IMR-90 (cell line): ENCODE measurements at regions of chr5 and their contacts with region 1.

Region 1: DNA sequence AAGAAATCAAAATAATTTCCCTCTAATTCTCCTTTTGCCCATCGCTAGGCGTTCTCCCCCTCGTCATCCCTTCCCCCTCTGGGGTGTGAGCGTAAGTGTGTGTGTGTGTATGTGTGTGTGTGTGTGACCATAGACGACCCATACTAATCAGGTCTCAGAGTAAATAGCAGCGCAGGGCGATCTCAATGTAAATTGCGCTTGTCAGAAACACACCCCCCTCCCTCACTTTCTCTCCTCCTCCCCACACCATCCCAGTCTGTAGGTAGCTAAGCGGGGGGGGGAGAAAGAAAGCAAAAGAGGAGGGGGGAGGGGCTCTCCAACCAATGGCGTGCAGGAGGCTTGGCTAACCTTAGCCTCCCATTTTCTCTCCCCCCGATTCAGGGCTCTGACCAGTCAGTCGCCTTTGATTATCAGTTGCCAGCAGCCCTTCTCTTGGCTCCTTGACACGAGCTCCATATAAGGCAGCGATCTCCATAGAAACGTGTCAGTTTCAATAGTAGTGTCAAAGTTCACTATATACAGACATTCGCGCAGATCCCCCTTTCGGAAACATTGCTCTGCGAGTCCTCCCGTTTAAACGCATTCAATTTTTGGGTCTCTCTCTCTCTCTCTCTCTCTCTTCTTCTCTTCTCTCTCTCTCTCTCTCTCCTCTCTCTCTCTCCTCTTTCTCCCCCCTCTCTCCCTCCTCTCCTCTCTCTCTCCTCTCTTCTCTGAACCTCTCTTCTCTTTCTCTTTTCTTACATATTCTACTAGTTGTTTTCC is at the start of gene NR2F1:
- DNase-seq: peak; percentile 99
- ATAC-seq: peak; percentile 45
- H3K4me3 ChIP-seq: peak within 1 kb of the TSS; percentile 99
- H3K27ac ChIP-seq: peak within 1 kb of the TSS; percentile 97
- H3K4me1 ChIP-seq: no peaks in the 10 kb centered on the region
- H3K27me3 ChIP-seq: no peaks in the 10 kb centered on the region
- CTCF ChIP-seq: 0 out of 2 replicates have a peak, but pooled peaks have one; percentile 23
- POLR2A ChIP-seq: peak; percentile 69
- RAD21 ChIP-seq: no peak
- total RNA-seq, gene NR2F1: 18.1 and 19.0 TPM in 2 replicates

Region 2: DNA sequence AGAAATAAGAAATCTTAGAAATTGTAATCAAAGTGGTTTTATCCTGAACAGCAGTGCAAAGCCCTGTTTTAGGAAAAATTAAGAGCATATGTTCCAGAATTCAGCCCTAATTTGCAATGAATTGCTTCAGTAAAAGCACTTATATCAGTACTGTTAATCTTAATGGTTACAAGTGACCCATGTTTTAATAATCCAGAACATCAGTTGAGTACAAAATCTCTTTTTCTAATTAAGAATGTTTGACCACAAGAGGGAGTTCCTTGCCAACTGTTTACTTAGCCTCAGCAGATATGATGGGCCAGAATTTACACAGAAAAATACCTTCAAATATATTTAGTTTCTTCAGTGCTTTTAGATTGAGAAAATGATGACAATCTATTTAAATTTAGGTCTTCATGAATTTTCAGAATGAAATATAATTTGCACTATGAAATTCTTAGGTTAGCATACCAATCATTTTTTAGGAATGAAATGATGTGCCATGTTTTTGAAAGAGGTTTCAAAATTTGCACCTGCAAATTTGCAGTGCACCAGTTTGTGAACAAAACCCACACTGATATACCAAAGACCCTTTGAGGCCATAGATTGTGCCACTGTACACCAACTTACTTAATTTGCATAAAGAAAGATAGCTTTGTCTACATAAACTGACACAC is 1273.4 kb before region 1 on chr5:
- CTCF ChIA-PET with region 1: no interaction called
- POLR2A ChIA-PET with region 1: no interaction called
- dilution Hi-C with region 1: no loop called
- in situ Hi-C with region 1: loop called (anchors 25 kb)
- intact Hi-C with region 1: loop called (anchors 2 kb)
- DNase-seq: peak; percentile 59
- ATAC-seq: peak; percentile 74
- H3K4me3 ChIP-seq: no peak overlapping the region
- H3K27ac ChIP-seq: no peak overlapping the region
- H3K4me1 ChIP-seq: no peaks in the 10 kb centered on the region
- H3K27me3 ChIP-seq: no peaks in the 10 kb centered on the region
- CTCF ChIP-seq: peak; percentile 66
- POLR2A ChIP-seq: no peak
- RAD21 ChIP-seq: peak; percentile 77

Region 3: DNA sequence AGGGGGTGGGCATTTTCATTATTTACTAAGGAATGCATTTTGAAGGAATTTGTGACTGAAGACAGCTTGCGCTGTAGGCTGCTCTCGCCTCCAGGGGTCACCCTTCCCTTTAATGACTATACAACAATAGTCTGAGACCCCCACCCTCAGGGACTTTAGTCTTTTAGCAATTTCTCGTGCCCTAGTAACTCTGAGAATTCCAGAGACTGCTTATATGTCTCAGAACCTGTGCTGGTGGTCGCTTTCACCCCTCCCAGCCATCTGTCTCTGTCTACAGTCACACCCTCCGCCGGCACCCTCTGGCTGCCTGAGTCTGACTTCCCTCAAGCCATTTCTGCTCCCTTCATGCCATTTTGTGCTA is 673.3 kb before region 1 on chr5:
- CTCF ChIA-PET with region 1: no interaction called
- POLR2A ChIA-PET with region 1: no interaction called
- dilution Hi-C with region 1: no loop called
- in situ Hi-C with region 1: loop called (anchors 25 kb)
- intact Hi-C with region 1: loop called (anchors 2 kb)
- DNase-seq: peak; percentile 11
- ATAC-seq: no peak
- H3K4me3 ChIP-seq: no peak overlapping the region
- H3K27ac ChIP-seq: no peak overlapping the region
- H3K4me1 ChIP-seq: peaks cover 3% of the 10 kb centered on the region
- H3K27me3 ChIP-seq: no peaks in the 10 kb centered on the region
- CTCF ChIP-seq: peak; percentile 43
- POLR2A ChIP-seq: no peak
- RAD21 ChIP-seq: peak; percentile 49

Region 4: GRCh38 chr5:93100976-93101375 is 481.9 kb before region 1 on chr5:
- CTCF ChIA-PET with region 1: no interaction called
- POLR2A ChIA-PET with region 1: interaction called, 10 read pairs
- dilution Hi-C with region 1: no loop called
- in situ Hi-C with region 1: no loop called
- intact Hi-C with region 1: no loop called
- DNase-seq: no peak
- ATAC-seq: peak; percentile 42; the same call in 1 of the 2 replicates
- H3K4me3 ChIP-seq: no peak overlapping the region
- H3K27ac ChIP-seq: no peak overlapping the region
- H3K4me1 ChIP-seq: peaks cover 3% of the 10 kb centered on the region
- H3K27me3 ChIP-seq: no peaks in the 10 kb centered on the region
- CTCF ChIP-seq: no peak
- POLR2A ChIP-seq: no peak
- RAD21 ChIP-seq: no peak

Region 5: DNA sequence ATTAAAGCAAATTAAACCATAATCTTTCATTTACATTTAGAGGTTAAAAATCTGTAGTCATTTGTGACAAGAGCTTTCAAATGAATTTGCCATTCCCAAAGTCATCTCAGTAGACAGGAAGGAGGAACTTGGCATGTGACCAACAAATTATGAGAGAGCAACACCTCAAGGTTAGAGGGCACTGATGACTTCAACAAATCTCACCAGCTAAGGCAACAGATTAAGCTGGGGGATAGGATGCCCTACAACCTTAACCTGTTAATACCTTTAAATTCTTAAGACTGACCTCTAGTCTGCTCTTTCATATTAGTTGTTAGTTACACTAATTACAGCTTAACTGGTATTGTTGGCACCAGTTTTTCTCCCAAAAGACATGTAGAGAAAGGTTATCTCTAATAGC is 140.1 kb after region 1 on chr5:
- CTCF ChIA-PET with region 1: no interaction called
- POLR2A ChIA-PET with region 1: interaction called, 11 read pairs
- dilution Hi-C with region 1: no loop called
- in situ Hi-C with region 1: no loop called
- intact Hi-C with region 1: no loop called
- DNase-seq: peak; percentile 46
- ATAC-seq: no peak
- H3K4me3 ChIP-seq: no peak overlapping the region
- H3K27ac ChIP-seq: no peak overlapping the region
- H3K4me1 ChIP-seq: peaks cover 2% of the 10 kb centered on the region
- H3K27me3 ChIP-seq: no peaks in the 10 kb centered on the region
- CTCF ChIP-seq: no peak
- POLR2A ChIP-seq: no peak
- RAD21 ChIP-seq: no peak

Region 6: GRCh38 chr5:93964421-93964820 is 381.6 kb after region 1 on chr5:
- CTCF ChIA-PET with region 1: no interaction called
- POLR2A ChIA-PET with region 1: no interaction called
- dilution Hi-C with region 1: no loop called
- in situ Hi-C with region 1: no loop called
- intact Hi-C with region 1: no loop called
- DNase-seq: no peak
- ATAC-seq: no peak
- H3K4me3 ChIP-seq: no peak overlapping the region
- H3K27ac ChIP-seq: no peak overlapping the region
- H3K4me1 ChIP-seq: no peaks in the 10 kb centered on the region
- H3K27me3 ChIP-seq: no peaks in the 10 kb centered on the region
- CTCF ChIP-seq: no peak
- POLR2A ChIP-seq: no peak
- RAD21 ChIP-seq: no peak

Region 7: GRCh38 chr5:94102849-94103248 is 520.0 kb after region 1 on chr5:
- CTCF ChIA-PET with region 1: no interaction called
- POLR2A ChIA-PET with region 1: no interaction called
- dilution Hi-C with region 1: no loop called
- in situ Hi-C with region 1: no loop called
- intact Hi-C with region 1: loop called (anchors 10 kb)
- DNase-seq: no peak
- ATAC-seq: no peak
- H3K4me3 ChIP-seq: no peak overlapping the region
- H3K27ac ChIP-seq: no peak overlapping the region
- H3K4me1 ChIP-seq: no peaks in the 10 kb centered on the region; the same call in 1 of the 2 replicates
- H3K27me3 ChIP-seq: no peaks in the 10 kb centered on the region
- CTCF ChIP-seq: no peak
- POLR2A ChIP-seq: no peak
- RAD21 ChIP-seq: no peak